Common myeloid progenitor, CD34-positive (primary cell): ENCODE measurements at regions of chr18 and their contacts with region 1.

Region 1: DNA sequence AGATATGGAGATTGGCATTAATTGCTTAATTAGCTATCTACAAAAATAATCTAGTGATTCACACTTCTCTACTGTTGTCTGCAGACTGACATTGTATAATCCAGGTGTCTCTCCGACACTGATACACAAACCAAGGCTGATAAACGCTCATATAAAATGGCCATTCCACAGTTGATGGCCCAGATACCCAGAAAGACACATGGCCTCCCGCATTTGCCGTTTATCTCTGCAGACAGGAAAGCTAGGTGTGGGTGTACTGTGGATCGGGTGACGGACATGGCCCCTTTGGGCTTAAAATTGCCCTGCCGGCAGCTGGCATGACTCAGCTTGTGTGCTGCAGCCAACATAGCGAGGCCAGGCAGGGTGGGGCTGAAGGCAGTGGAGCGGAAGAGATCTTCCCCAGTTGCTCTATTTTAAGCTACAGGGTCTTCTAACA is 18.5 kb downstream of the PMAIP1 start:
- DNase-seq: peak; percentile 80 to 97 (median 94)
- H3K4me3 ChIP-seq: peak overlapping the region in 5 of 7 experiments; percentile 28 to 56 (median 35)
- H3K27ac ChIP-seq: peak overlapping the region in 1 of 2 experiments; percentile 64
- H3K4me1 ChIP-seq: peaks cover 21 to 61% (median 43%) of the 10 kb centered on the region in 4 experiments
- H3K27me3 ChIP-seq: no peaks in the 10 kb centered on the region

Region 2: DNA sequence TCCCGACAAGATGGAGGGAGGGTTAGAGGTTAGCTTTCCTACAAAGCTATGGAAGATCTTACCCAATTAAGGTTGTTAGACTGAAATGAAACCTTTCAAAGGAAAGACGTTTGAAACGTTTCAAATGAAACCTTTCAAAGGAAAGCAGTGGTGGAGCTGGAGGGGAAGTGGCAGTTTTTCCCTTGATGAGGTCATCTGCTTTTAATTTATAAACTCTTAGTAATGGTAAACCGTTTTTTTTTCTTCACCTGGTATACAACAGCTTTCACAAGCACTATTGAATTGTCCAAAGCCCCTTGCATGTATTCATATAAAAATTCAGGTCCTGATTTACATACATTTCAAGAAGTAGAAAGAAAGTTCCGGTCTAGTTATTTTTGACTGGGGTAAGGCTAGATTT is 11.2 kb before region 1 on chr18:
- CTCF ChIA-PET with region 1: interaction called, 13 read pairs
- POLR2A ChIA-PET with region 1: interaction called, 7 read pairs
- DNase-seq: peak in 2 of 3 donors; percentile 68 to 73
- H3K4me3 ChIP-seq: peak overlapping the region in 2 of 7 experiments; percentile 3 to 14
- H3K27ac ChIP-seq: no peak overlapping the region
- H3K4me1 ChIP-seq: peaks cover 16 to 70% (median 36%) of the 10 kb centered on the region in 4 experiments
- H3K27me3 ChIP-seq: no peaks in the 10 kb centered on the region

Region 3: DNA sequence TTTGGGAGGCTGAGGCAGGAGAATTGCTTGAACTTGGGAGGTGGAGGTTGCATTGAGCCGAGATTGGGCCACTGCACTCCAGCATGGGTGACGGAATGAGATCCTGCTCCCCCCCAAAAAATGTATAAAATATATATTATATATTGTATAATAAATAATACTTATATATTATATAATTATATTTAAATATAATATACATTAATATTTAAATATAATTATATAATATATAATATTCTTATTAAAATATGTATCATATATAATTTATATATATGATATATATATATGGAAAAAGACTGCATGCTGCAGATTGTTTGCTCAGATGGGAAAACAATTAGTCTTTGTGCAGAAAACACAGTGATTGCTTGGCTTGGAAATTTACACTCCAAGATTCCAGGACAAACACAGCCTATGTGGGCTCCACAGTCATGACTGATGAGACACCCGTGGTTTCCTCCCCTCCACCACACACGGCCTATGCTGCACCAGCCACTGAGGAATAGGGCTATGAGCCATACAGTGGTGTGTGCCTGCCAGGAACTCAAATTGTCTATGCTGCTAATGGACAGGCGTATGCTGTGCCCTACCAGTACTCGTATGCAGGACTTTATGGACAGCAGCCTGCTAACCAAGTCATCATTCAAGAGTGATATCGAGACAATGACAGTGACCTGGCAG is 11.4 kb after region 1 on chr18:
- CTCF ChIA-PET with region 1: interaction called, 12 read pairs
- POLR2A ChIA-PET with region 1: no interaction called
- DNase-seq: peak in 2 of 3 donors; percentile 46 to 58
- H3K4me3 ChIP-seq: no peak overlapping the region
- H3K27ac ChIP-seq: no peak overlapping the region
- H3K4me1 ChIP-seq: peaks cover 9 to 29% (median 19%) of the 10 kb centered on the region in 4 experiments
- H3K27me3 ChIP-seq: no peaks in the 10 kb centered on the region